Activated CD4-positive, alpha-beta T cell treated with anti-CD3 and anti-CD28 coated beads, Interleukin-2, amount 10 ng/mL, durations not matched to agents 24 days and 14 days (primary cell): ENCODE measurements at regions of chr7 and their contacts with region 1.

Region 1: GRCh38 chr7:117014673-117015133 is 61.4 kb downstream of the ST7 start:
- DNase-seq: no peak
- H3K4me3 Mint-ChIP-seq: no peak overlapping the region
- H3K27ac Mint-ChIP-seq: no peak overlapping the region
- H3K4me1 Mint-ChIP-seq: peaks cover 31% of the 10 kb centered on the region
- H3K27me3 Mint-ChIP-seq: peaks cover 39% of the 10 kb centered on the region

Region 2: GRCh38 chr7:116886543-116887156 is 128.1 kb before region 1 on chr7:
- intact Hi-C with region 1: no loop called
- DNase-seq: no peak
- H3K4me3 Mint-ChIP-seq: no peak overlapping the region
- H3K27ac Mint-ChIP-seq: no peak overlapping the region
- H3K4me1 Mint-ChIP-seq: peaks cover 9% of the 10 kb centered on the region
- H3K27me3 Mint-ChIP-seq: no peaks in the 10 kb centered on the region

Region 3: DNA sequence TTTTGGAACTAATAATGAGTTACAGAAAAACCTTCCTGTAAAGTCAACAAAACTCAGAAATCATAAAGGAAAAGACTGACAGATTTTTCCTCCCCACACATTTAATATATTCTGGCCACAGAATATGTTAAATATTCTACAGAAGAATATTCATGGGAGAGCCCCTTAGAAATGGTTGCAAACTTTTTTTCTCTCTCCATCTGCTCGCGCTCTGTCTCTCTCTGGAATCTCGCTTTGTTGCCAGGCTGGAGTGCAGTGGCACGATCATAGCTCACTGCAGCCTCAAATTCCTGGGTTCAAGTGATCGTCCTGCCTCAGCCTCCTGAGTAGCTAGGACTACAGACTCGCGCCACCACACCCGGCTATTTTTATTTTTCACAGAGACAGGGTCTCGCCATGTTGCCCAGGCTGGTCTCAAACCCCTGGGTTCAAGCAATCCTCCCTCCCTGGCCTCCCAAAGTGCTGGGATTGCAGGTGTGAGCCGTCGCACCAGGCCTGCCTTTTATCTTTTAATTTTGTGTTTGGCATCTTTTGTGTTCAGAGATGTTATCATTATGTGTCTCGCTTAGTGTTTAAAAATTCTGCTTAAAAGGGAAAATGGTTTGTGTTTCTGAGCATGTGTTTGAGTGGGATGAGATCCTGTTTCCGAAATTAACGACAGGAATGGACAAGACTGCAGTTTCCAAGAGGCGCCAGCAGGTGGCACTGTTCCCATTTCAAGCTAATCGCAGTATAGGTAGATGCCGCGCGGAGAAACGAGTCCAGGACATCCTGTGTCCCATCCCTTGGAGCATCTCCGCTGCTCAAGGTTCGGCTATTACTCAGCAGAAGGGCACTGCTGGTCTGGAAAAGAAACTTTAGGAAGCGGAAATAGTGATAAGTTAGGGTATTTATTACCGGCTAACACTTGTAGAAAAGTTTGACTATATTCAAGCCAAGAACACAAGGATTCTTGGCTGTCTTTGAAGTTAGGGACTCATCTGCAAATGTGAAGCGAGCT is 84.5 kb before region 1 on chr7:
- intact Hi-C with region 1: loop called (anchors 1 kb)
- DNase-seq: peak; percentile 90
- H3K4me3 Mint-ChIP-seq: no peak overlapping the region
- H3K27ac Mint-ChIP-seq: no peak overlapping the region
- H3K4me1 Mint-ChIP-seq: peaks cover 4% of the 10 kb centered on the region
- H3K27me3 Mint-ChIP-seq: peaks cover 23% of the 10 kb centered on the region

Region 4: GRCh38 chr7:116984917-116985316 is 29.8 kb before region 1 on chr7:
- intact Hi-C with region 1: loop called (anchors 1 kb)
- DNase-seq: no peak
- H3K4me3 Mint-ChIP-seq: no peak overlapping the region
- H3K27ac Mint-ChIP-seq: no peak overlapping the region
- H3K4me1 Mint-ChIP-seq: no peaks in the 10 kb centered on the region
- H3K27me3 Mint-ChIP-seq: peaks cover 2% of the 10 kb centered on the region

Region 5: DNA sequence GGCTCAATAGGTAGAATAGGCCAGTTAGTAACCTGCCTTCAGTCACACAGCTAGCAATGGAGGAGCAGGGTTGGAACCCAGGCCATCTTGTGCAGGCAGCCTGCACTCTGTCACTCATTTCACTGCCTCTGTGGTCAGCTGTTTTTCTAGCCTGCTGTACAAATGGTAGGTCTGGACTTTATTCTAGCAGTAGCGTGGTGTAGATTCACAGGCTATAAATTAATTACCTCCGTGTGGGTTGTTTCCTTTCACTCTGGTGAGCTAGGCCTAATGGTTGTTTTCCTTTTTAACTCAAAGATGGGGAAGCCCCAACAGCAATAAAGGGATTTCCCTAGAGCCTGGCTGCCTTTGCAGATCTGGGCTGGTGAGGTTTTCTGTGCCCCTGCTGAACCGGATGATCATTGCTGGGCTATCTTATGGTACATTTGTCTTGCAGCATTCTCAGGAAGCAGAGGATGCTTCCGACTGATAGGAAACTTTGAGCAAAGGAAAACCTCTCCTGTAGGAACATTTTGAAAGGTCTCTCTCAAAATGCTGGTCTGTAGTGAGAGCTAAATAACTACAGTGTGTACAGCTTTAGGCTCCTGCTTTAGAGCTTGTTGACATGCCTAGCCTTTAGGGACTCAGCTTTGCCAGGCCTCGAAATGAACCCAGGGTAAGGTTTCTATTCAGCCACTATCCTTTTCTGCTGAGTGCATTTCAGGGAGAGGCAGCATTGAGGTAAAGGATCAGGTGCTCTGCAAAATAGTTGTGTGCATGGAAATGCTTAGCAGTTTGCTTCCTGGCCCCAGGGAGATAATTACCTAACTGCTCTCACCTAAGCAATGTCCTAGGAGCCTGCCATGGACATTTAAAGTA is 96.0 kb after region 1 on chr7:
- intact Hi-C with region 1: loop called (anchors 1 kb)
- DNase-seq: peak; percentile 82
- H3K4me3 Mint-ChIP-seq: peak overlapping the region; percentile 29
- H3K27ac Mint-ChIP-seq: peak overlapping the region; percentile 59
- H3K4me1 Mint-ChIP-seq: peaks cover 20% of the 10 kb centered on the region
- H3K27me3 Mint-ChIP-seq: peaks cover 29% of the 10 kb centered on the region